ENCODE measurements at regions of chr13 and their contacts with region 1.

Region 1: GRCh38 chr13:76667551-76667950 is 218.7 kb downstream of the KCTD12 start:
- DNase-seq: no peak
- ATAC-seq: peak; percentile 57
- H3K4me3 ChIP-seq: no peak overlapping the region
- H3K27ac ChIP-seq: no peak overlapping the region
- H3K4me1 ChIP-seq: peaks cover 9% of the 10 kb centered on the region
- H3K27me3 ChIP-seq: no peaks in the 10 kb centered on the region
- CTCF ChIP-seq: peak; percentile 37

Region 2: GRCh38 chr13:76886292-76887075 is 218.9 kb after region 1 on chr13 and contains the start of gene KCTD12:
- intact Hi-C with region 1: loop called (anchors 10 kb)
- DNase-seq: peak; percentile 95
- ATAC-seq: peak; percentile 85
- H3K4me3 ChIP-seq: peak within 1 kb of the TSS; percentile 86
- H3K27ac ChIP-seq: peak within 1 kb of the TSS; percentile 92
- H3K4me1 ChIP-seq: peaks cover 7% of the 10 kb centered on the region
- H3K27me3 ChIP-seq: no peaks in the 10 kb centered on the region
- CTCF ChIP-seq: peak; percentile 31
- total RNA-seq, gene KCTD12: 152 TPM